PC-3 (cell line): ENCODE measurements at regions of chr6 and their contacts with region 1.

Region 1: GRCh38 chr6:7992002-7992815 is 72.0 kb downstream of the BLOC1S5 start:
- DNase-seq: peak; percentile 60
- ATAC-seq: peak; percentile 82
- H3K4me3 ChIP-seq: no peak overlapping the region
- H3K27ac ChIP-seq: no peak overlapping the region
- H3K4me1 ChIP-seq: no peaks in the 10 kb centered on the region
- H3K27me3 ChIP-seq: no peaks in the 10 kb centered on the region
- CTCF ChIP-seq: peak; percentile 88

Region 2: GRCh38 chr6:7846966-7847818 is 145.0 kb before region 1 on chr6:
- CTCF ChIA-PET with region 1: no interaction called
- POLR2A ChIA-PET with region 1: no interaction called
- intact Hi-C with region 1: no loop called
- DNase-seq: no peak
- ATAC-seq: no peak
- H3K4me3 ChIP-seq: no peak overlapping the region
- H3K27ac ChIP-seq: no peak overlapping the region
- H3K4me1 ChIP-seq: no peaks in the 10 kb centered on the region
- H3K27me3 ChIP-seq: no peaks in the 10 kb centered on the region
- CTCF ChIP-seq: no peak

Region 3: GRCh38 chr6:7910654-7911344 is 81.4 kb before region 1 on chr6 and contains the start of gene TXNDC5:
- CTCF ChIA-PET with region 1: no interaction called
- POLR2A ChIA-PET with region 1: no interaction called
- intact Hi-C with region 1: loop called (anchors 5 kb)
- DNase-seq: peak; percentile 74
- ATAC-seq: peak; percentile 80
- H3K4me3 ChIP-seq: peak within 1 kb of the TSS; percentile 91
- H3K27ac ChIP-seq: peak within 1 kb of the TSS; percentile 48
- H3K4me1 ChIP-seq: peaks cover 15% of the 10 kb centered on the region
- H3K27me3 ChIP-seq: no peaks in the 10 kb centered on the region
- CTCF ChIP-seq: no peak
- total RNA-seq, gene TXNDC5: 218 and 221 TPM in 2 replicates

Region 4: GRCh38 chr6:7954477-7955200 is 37.6 kb before region 1 on chr6:
- CTCF ChIA-PET with region 1: interaction called, 3 read pairs
- POLR2A ChIA-PET with region 1: no interaction called
- intact Hi-C with region 1: loop called (anchors 2 kb)
- DNase-seq: peak; percentile 61
- ATAC-seq: peak; percentile 51
- H3K4me3 ChIP-seq: no peak overlapping the region
- H3K27ac ChIP-seq: peak overlapping the region; percentile 33
- H3K4me1 ChIP-seq: peaks cover 25% of the 10 kb centered on the region
- H3K27me3 ChIP-seq: no peaks in the 10 kb centered on the region
- CTCF ChIP-seq: no peak

Region 5: DNA sequence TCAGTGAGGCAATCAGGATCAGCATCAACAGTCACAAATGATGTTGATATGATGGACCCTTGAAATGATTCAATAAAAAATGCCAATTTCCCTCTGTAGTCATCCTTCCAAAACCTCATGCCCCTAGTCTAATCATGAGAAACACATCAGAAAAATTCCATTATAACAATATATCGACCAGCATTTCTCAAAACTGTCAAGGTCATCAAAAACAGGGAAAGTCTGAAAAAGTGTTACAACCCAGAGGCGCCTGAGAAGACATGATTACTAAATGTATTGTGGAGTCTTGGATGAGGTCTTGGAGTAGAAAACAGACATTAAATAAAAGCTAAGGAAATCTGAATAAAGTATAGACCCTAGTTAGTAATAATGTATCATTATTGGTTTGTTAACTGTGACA is 309.3 kb after region 1 on chr6:
- CTCF ChIA-PET with region 1: no interaction called
- POLR2A ChIA-PET with region 1: no interaction called
- intact Hi-C with region 1: no loop called
- DNase-seq: no peak
- ATAC-seq: no peak
- H3K4me3 ChIP-seq: no peak overlapping the region
- H3K27ac ChIP-seq: no peak overlapping the region
- H3K4me1 ChIP-seq: no peaks in the 10 kb centered on the region
- H3K27me3 ChIP-seq: peaks cover 79% of the 10 kb centered on the region
- CTCF ChIP-seq: no peak

Region 6: DNA sequence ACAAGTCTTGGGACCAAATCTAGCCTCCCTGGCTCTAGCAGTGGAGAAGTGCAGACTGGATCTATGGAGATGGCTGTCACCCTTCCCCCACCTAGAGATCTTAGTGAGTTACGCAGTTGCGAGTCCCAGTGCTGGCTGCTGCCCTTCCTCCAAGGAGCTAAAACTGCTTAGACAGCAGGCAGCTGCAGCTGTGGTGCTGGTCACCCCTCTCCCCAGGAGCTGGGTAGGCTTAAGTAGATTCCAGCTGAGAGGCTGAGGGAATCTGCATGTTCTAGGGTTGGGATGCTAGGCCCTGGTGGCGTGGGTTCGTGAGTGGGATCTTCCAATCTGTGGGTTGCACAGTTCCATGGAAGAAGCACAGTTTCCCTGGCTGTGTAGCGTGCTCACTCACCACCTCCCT is 322.9 kb after region 1 on chr6:
- CTCF ChIA-PET with region 1: no interaction called
- POLR2A ChIA-PET with region 1: no interaction called
- intact Hi-C with region 1: no loop called
- DNase-seq: no peak
- ATAC-seq: no peak
- H3K4me3 ChIP-seq: no peak overlapping the region
- H3K27ac ChIP-seq: no peak overlapping the region
- H3K4me1 ChIP-seq: no peaks in the 10 kb centered on the region
- H3K27me3 ChIP-seq: peaks cover 24% of the 10 kb centered on the region
- CTCF ChIP-seq: no peak